ENCODE measurements at regions of chr13 and their contacts with region 1.

Region 1: GRCh38 chr13:105266615-105267014 is 1268.8 kb downstream of the EFNB2 start:
- DNase-seq: no peak
- H3K4me3 ChIP-seq: no peak overlapping the region
- H3K27ac ChIP-seq: no peak overlapping the region
- H3K27me3 ChIP-seq: no peaks in the 10 kb centered on the region
- CTCF ChIP-seq: no peak

Region 2: GRCh38 chr13:105278943-105279381 is 12.3 kb after region 1 on chr13:
- intact Hi-C with region 1: loop called in 1 of 2 experiments (anchors 1 kb)
- DNase-seq: no peak
- H3K4me3 ChIP-seq: no peak overlapping the region
- H3K27ac ChIP-seq: no peak overlapping the region
- H3K27me3 ChIP-seq: no peaks in the 10 kb centered on the region
- CTCF ChIP-seq: no peak

Region 3: DNA sequence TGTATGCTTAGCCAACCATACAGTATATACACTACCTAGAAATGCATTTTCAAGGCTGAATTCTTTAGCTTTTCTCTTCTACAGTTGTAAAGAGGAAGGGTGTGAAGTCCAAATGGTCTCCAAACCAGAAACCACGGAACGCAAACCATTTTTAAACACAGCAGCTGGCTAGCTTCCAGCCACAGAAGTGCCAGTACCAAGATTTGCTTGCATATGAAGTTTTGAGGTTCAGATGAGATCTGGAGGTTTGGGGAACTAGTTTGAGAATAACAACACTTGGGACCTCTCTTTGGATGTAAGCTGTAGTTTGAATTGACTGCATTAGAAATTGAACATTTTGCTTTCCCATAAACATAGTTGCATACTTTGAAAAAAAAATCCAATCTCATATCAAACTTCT is 25.4 kb after region 1 on chr13:
- intact Hi-C with region 1: no loop called
- DNase-seq: no peak
- H3K4me3 ChIP-seq: no peak overlapping the region
- H3K27ac ChIP-seq: no peak overlapping the region
- H3K27me3 ChIP-seq: peaks cover 0 to under 1% (median 0%) of the 10 kb centered on the region in 45 donors
- CTCF ChIP-seq: no peak

Region 4: GRCh38 chr13:105334211-105334610 is 67.6 kb after region 1 on chr13:
- intact Hi-C with region 1: no loop called
- DNase-seq: no peak
- H3K4me3 ChIP-seq: no peak overlapping the region
- H3K27ac ChIP-seq: no peak overlapping the region
- H3K27me3 ChIP-seq: no peaks in the 10 kb centered on the region
- CTCF ChIP-seq: no peak

Measured in dorsolateral prefrontal cortex (tissue), 120 donors.